H1 (cell line): ENCODE measurements at regions of chr6 and their contacts with region 1.

Region 1: DNA sequence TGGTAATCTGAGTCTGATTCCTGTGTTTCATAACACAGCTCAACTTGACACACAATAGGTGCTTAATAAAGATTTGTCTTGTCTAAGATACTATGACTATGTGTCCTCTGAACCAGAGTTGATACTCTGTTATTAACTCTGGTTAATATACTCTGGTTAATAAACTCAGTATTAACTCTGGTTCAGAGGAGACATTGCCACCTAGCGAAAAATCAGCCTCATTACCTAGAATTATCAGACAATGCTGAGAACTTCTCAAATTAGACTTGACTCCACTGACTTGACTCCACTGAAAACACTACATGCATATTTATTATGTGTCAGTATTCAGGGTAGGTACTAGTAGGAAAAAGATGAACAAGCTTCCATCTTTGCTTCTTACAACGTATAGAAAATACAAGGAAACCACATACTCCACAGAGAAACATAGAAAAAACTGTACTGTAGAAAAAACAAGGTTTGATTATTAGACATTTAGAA is 73.9 kb downstream of the AHI1 start:
- DNase-seq: no peak
- H3K4me3 ChIP-seq: no peak overlapping the region
- H3K27ac ChIP-seq: no peak overlapping the region
- H3K4me1 ChIP-seq: no peaks in the 10 kb centered on the region
- H3K27me3 ChIP-seq: no peaks in the 10 kb centered on the region
- CTCF ChIP-seq: peak in 2 of 3 experiments; percentile 43 to 71; a peak in 2 of 4 replicates
- EP300 ChIP-seq: no peak
- POLR2A ChIP-seq: no peak
- RAD21 ChIP-seq: peak; percentile 78 to 81

Region 2: GRCh38 chr6:135088818-135089809 is 334.6 kb before region 1 on chr6:
- CTCF ChIA-PET with region 1: interaction called, 10 read pairs
- POLR2A ChIA-PET with region 1: no interaction called
- DNase-seq: no peak
- H3K4me3 ChIP-seq: no peak overlapping the region
- H3K27ac ChIP-seq: no peak overlapping the region
- H3K4me1 ChIP-seq: no peaks in the 10 kb centered on the region; a peak in 2 of 7 replicates
- H3K27me3 ChIP-seq: no peaks in the 10 kb centered on the region; a peak in 1 of 7 replicates
- CTCF ChIP-seq: peak in 1 of 3 experiments; percentile 37; a peak in 2 of 4 replicates
- EP300 ChIP-seq: no peak
- POLR2A ChIP-seq: no peak
- RAD21 ChIP-seq: peak in 1 of 2 experiments; percentile 11; a peak in 1 of 4 replicates

Region 3: GRCh38 chr6:135393289-135393688 is 30.4 kb before region 1 on chr6:
- CTCF ChIA-PET with region 1: interaction called, 12 read pairs
- POLR2A ChIA-PET with region 1: no interaction called
- DNase-seq: no peak
- H3K4me3 ChIP-seq: no peak overlapping the region
- H3K27ac ChIP-seq: no peak overlapping the region
- H3K4me1 ChIP-seq: no peaks in the 10 kb centered on the region
- H3K27me3 ChIP-seq: no peaks in the 10 kb centered on the region
- CTCF ChIP-seq: no peak
- EP300 ChIP-seq: no peak
- POLR2A ChIP-seq: no peak
- RAD21 ChIP-seq: no peak

Region 4: GRCh38 chr6:135514706-135515105 is 91.0 kb after region 1 on chr6:
- CTCF ChIA-PET with region 1: no interaction called
- POLR2A ChIA-PET with region 1: no interaction called
- DNase-seq: no peak
- H3K4me3 ChIP-seq: no peak overlapping the region
- H3K27ac ChIP-seq: no peak overlapping the region
- H3K4me1 ChIP-seq: no peaks in the 10 kb centered on the region
- H3K27me3 ChIP-seq: no peaks in the 10 kb centered on the region
- CTCF ChIP-seq: no peak
- EP300 ChIP-seq: no peak
- POLR2A ChIP-seq: no peak
- RAD21 ChIP-seq: no peak